ENCODE measurements at regions of chr1 and their contacts with region 1.

Region 1: GRCh38 chr1:21651214-21652042 is 17.7 kb downstream of the RAP1GAP start:
- DNase-seq: peak; percentile 20
- H3K4me3 Mint-ChIP-seq: peak overlapping the region; percentile 74
- H3K27ac Mint-ChIP-seq: no peak overlapping the region
- H3K4me1 Mint-ChIP-seq: peaks cover 12% of the 10 kb centered on the region
- H3K27me3 Mint-ChIP-seq: peaks cover 28% of the 10 kb centered on the region

Region 2: DNA sequence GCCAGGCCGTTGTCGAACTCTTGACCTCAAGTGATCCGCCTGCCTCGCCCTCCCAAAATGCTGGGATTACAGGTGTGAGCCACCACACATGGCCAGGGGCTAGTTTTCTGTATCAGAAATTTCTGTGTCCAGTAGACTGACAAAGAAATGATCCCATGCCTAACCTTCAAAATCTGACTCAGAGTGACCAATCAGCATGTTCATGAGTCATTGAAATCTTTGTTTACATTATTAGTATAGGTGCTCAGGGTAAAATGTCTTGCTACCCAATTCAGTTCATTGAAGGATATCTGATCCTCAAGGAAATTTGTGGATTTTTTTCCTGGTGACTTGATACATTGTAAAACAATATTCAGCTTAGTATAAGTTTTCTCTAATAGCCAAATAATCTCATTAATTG is 149.7 kb after region 1 on chr1:
- intact Hi-C with region 1: no loop called
- DNase-seq: no peak
- H3K4me3 Mint-ChIP-seq: no peak overlapping the region
- H3K27ac Mint-ChIP-seq: no peak overlapping the region
- H3K4me1 Mint-ChIP-seq: no peaks in the 10 kb centered on the region
- H3K27me3 Mint-ChIP-seq: peaks cover 1% of the 10 kb centered on the region

Region 3: DNA sequence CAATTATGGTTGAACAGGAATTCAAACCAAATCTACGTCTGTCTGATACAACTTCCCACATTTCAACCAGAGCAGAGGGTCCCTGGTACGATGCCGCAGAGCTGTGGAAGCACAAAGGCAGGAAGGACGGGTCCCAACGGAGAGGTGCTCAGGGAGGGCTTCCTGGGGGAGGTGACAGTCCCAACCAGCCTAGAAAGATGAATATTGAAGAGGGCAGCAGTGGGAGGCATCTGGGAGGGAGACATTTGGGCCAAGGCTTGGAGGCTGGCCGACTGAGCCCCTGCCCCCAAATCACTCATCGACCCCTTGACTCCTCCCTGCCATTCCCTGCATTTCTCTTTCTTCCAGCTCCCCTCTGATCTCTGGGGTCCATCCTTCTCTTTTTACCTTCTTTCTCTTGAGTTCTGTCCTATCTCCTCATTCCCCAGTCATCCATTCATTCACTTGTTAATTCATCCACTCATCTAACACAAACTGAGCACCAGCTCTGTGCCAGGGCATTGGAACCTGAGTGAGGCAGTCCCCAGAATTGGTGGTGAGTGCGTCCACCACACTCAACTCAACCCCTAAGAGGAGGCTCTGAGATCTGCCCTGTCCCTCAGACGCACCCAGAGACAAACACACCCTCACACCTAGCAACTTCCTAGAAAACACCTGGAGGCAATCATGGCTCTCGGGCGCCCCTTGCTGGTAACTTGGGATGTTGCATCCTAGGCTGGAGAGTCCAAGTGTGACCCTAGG is 312.2 kb after region 1 on chr1:
- intact Hi-C with region 1: loop called (anchors 5 kb)
- DNase-seq: peak; percentile 70
- H3K4me3 Mint-ChIP-seq: no peak overlapping the region
- H3K27ac Mint-ChIP-seq: no peak overlapping the region
- H3K4me1 Mint-ChIP-seq: peaks cover 2% of the 10 kb centered on the region
- H3K27me3 Mint-ChIP-seq: peaks cover 2% of the 10 kb centered on the region